Activated CD8-positive, alpha-beta T cell treated with anti-CD3 and anti-CD28 coated beads for 36 hours (primary cell): ENCODE measurements at regions of chr17 and their contacts with region 1.

Region 1: DNA sequence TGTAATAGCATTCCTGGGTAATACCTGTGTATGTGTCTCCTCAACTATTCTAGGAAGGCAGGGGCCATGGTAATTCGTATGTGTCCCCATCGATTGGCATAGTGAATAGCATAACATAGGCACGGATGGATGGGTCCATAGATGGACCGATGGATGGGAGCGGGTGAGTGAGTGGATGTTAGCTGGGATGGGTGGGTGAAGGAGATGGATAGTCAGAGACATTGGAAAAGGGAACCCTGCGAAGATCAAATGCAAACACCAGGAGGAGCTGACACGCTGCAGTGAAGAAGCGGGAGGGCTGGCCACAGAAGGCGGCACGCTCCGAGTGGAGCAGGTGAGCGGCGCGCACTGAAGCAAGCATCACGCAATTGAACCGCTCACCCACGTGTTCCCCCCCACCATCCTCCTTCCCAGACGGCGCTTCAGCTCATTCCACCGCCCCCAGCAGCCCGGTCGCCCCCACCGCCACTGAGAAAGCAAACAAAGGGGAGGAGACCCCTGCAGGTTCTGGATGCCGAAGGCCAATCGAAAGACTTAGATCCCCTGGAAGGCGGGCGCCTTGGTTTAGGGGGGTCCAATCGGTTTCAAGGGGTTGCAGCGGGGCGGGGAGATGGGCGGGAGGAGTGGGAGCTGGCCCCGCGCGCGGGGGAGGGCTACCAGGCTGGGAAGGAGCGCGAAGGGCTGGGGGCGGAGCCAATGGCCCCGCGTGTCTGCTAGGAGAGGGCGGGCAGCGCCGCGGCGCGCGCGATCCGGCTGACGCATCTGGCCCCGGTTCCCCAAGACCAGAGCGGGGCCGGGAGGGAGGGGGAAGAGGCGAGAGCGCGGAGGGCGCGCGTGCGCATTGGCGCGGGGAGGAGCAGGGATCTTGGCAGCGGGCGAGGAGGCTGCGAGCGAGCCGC is at the start of gene ARRB2:
- DNase-seq: peak; percentile 99
- ATAC-seq: peak; percentile 84
- H3K4me3 Mint-ChIP-seq: peak within 1 kb of the TSS; percentile 98
- H3K27ac Mint-ChIP-seq: peak within 1 kb of the TSS; percentile 94
- H3K4me1 Mint-ChIP-seq: peaks cover 46% of the 10 kb centered on the region
- H3K27me3 Mint-ChIP-seq: no peaks in the 10 kb centered on the region
- CTCF ChIP-seq: peak; percentile 58
- total RNA-seq, gene ARRB2: 163 to 176 TPM

Region 2: DNA sequence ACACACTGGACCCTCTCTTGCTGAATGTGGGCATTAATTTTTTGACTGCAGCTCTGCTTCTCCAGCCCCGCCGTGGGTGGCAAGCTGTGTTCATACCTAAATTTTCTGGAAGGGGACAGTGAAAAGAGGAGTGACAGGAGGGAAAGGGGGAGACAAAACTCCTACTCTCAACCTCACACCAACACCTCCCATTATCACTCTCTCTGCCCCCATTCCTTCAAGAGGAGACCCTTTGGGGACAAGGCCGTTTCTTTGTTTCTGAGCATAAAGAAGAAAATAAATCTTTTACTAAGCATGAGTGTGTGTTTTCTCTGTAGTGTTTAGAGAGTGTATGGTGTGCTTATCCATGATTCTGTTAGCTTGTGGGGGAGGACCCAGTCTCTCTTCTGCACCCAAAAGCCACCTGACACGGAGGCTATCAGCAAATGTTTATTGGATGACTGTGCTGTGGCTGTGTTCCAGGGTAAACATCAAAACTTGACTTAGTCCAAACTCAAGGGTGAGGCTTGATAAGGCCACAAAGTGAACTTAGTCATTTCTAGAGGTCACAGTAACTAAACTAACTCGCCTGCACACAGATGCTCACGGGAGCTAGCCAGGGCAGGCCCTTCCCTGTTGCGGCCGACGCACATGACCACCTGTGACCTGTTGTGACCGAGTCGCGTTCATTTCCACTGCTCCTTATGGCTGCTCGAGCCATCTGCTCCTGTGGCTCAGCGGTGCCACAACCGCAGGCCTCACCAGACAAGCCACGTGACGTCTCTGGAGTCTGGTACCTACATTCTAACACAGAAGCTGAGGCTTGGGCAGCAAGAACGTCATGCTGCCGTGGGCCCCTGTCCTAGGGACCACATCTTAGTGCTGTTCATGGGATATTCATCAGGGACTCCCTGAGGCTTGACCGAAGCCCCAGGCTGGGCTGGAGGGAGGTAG is 11.4 kb after region 1 on chr17:
- CTCF ChIA-PET with region 1: interaction called, 3 read pairs
- POLR2A ChIA-PET with region 1: interaction called, 17 read pairs
- intact Hi-C with region 1: no loop called
- DNase-seq: peak; percentile 43
- ATAC-seq: peak; percentile 56
- H3K4me3 Mint-ChIP-seq: no peak overlapping the region
- H3K27ac Mint-ChIP-seq: no peak overlapping the region
- H3K4me1 Mint-ChIP-seq: peaks cover 14% of the 10 kb centered on the region
- H3K27me3 Mint-ChIP-seq: no peaks in the 10 kb centered on the region
- CTCF ChIP-seq: no peak

Region 3: GRCh38 chr17:4881761-4882555 is 171.9 kb after region 1 on chr17:
- CTCF ChIA-PET with region 1: interaction called, 3 read pairs
- POLR2A ChIA-PET with region 1: no interaction called
- intact Hi-C with region 1: loop called (anchors 5 kb)
- DNase-seq: peak; percentile 79
- ATAC-seq: peak; percentile 94
- H3K4me3 Mint-ChIP-seq: no peak overlapping the region
- H3K27ac Mint-ChIP-seq: no peak overlapping the region
- H3K4me1 Mint-ChIP-seq: no peaks in the 10 kb centered on the region
- H3K27me3 Mint-ChIP-seq: no peaks in the 10 kb centered on the region
- CTCF ChIP-seq: peak; percentile 94